Activated B cell treated with CpG ODN at 0.5 μM for 24 hours (primary cell): ENCODE measurements at regions of chr10 and their contacts with region 1.

Region 1: GRCh38 chr10:62816331-62817120 is at the start of gene EGR2:
- DNase-seq: peak; percentile 96
- ATAC-seq: peak; percentile 75
- H3K4me3 Mint-ChIP-seq: peak within 1 kb of the TSS; percentile 92
- H3K27ac Mint-ChIP-seq: peak within 1 kb of the TSS; percentile 94
- H3K4me1 Mint-ChIP-seq: peaks cover 56% of the 10 kb centered on the region
- H3K27me3 Mint-ChIP-seq: peaks cover 8% of the 10 kb centered on the region
- CTCF ChIP-seq: no peak
- total RNA-seq, gene EGR2: 6.1 and 9.4 TPM in 2 replicates

Region 2: DNA sequence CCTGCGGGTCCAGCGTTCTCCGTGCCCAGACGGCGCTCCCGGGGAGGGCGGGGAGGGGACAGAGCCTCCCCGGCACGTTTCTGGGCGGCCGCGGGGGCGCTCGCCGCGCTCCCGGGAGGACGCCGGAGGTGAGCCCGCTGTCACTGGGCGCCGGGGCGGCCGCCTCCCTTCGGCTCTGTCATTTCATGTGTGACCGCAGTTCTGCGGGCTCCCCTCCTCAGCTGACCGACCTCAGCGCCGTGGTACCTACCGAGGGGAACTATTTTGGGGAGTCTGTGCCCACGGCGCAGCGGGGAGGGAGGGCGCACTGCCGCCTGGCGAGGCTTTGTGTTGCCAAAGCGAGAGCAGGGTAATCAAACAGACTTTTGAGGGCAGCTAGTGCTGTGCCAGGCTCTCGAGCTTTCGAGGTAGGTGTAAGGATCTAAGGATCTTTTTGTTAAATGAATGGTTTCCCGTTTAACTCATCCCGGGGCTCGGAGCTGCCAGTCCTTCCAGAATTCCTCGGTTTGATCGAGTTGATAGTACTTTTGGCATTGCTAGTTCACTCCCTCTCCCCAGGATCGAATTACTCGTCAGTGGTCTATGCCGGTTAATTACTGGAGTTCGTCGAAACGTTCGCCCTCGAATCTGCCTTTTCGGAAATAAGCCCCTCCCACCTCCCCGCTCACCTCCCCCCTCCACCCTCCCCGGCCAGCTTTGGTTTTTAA is 913.2 kb before region 1 on chr10:
- CTCF ChIA-PET with region 1: no interaction called
- POLR2A ChIA-PET with region 1: interaction called, 3 read pairs
- intact Hi-C with region 1: loop called (anchors 2 kb)
- DNase-seq: peak; percentile 76
- ATAC-seq: peak; percentile 46
- H3K4me3 Mint-ChIP-seq: peak overlapping the region; percentile 97
- H3K27ac Mint-ChIP-seq: peak overlapping the region; percentile 98
- H3K4me1 Mint-ChIP-seq: peaks cover 51% of the 10 kb centered on the region
- H3K27me3 Mint-ChIP-seq: no peaks in the 10 kb centered on the region
- CTCF ChIP-seq: no peak

Region 3: GRCh38 chr10:62492012-62492869 is 324.3 kb before region 1 on chr10:
- CTCF ChIA-PET with region 1: interaction called, 6 read pairs
- POLR2A ChIA-PET with region 1: no interaction called
- intact Hi-C with region 1: loop called (anchors 1 kb)
- DNase-seq: no peak
- ATAC-seq: peak; percentile 49
- H3K4me3 Mint-ChIP-seq: no peak overlapping the region
- H3K27ac Mint-ChIP-seq: no peak overlapping the region
- H3K4me1 Mint-ChIP-seq: peaks cover 27% of the 10 kb centered on the region
- H3K27me3 Mint-ChIP-seq: peaks cover 4% of the 10 kb centered on the region
- CTCF ChIP-seq: no peak

Region 4: DNA sequence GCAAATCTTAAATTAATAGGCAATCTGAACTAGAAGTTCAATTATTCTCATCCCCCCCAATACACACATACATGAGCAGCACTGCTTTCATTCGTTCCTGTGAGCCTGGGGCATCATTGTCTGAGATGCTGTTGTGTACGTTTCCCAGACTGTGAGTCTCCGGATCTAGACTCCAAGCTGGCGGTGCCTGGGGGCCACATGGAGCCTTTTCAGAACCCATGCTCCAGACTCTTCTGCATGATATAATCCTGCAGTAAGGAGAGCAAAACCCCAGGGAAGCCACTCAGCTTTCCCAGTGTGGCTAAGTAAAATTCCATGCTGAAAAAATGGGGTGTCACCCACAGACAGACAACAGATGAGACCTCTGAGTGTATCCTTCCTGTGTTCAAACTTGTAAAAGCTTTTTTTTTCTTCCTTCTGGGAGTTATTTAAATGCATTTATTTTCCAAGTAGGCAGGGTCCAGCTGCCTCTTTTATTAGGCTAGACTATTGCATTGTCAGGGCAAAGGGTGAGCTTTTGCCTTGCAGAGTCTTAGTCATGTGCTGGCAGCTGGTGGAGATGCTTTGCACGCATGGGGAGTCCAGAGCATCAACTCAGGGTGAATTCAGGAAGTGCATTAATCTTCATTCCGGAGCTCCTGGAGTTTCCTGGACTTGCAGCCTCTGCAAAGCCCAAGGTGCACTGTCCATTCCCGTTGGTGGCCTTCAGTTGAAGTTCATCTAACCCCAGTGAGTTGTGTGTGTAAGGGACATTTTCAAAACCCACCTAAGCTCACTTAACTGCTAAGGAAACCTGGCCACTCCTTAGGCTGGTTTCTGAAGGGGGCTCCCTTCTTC is 197.7 kb before region 1 on chr10:
- CTCF ChIA-PET with region 1: interaction called, 171 read pairs
- POLR2A ChIA-PET with region 1: interaction called, 4 read pairs
- intact Hi-C with region 1: no loop called
- DNase-seq: no peak
- ATAC-seq: peak; percentile 80
- H3K4me3 Mint-ChIP-seq: no peak overlapping the region
- H3K27ac Mint-ChIP-seq: peak overlapping the region; percentile 68
- H3K4me1 Mint-ChIP-seq: peaks cover 28% of the 10 kb centered on the region
- H3K27me3 Mint-ChIP-seq: no peaks in the 10 kb centered on the region
- CTCF ChIP-seq: no peak

Region 5: GRCh38 chr10:62689712-62690111 is 126.8 kb before region 1 on chr10:
- CTCF ChIA-PET with region 1: interaction called, 5 read pairs
- POLR2A ChIA-PET with region 1: interaction called, 6 read pairs
- intact Hi-C with region 1: loop called (anchors 2 kb)
- DNase-seq: no peak
- ATAC-seq: peak; percentile 76
- H3K4me3 Mint-ChIP-seq: peak overlapping the region; percentile 70
- H3K27ac Mint-ChIP-seq: peak overlapping the region; percentile 75
- H3K4me1 Mint-ChIP-seq: peaks cover 43% of the 10 kb centered on the region
- H3K27me3 Mint-ChIP-seq: no peaks in the 10 kb centered on the region
- CTCF ChIP-seq: no peak

Region 6: GRCh38 chr10:63027531-63027930 is 211.0 kb after region 1 on chr10:
- CTCF ChIA-PET with region 1: no interaction called
- POLR2A ChIA-PET with region 1: no interaction called
- intact Hi-C with region 1: no loop called
- DNase-seq: no peak
- ATAC-seq: no peak
- H3K4me3 Mint-ChIP-seq: no peak overlapping the region
- H3K27ac Mint-ChIP-seq: no peak overlapping the region
- H3K4me1 Mint-ChIP-seq: no peaks in the 10 kb centered on the region
- H3K27me3 Mint-ChIP-seq: peaks cover 4% of the 10 kb centered on the region
- CTCF ChIP-seq: no peak

Region 7: DNA sequence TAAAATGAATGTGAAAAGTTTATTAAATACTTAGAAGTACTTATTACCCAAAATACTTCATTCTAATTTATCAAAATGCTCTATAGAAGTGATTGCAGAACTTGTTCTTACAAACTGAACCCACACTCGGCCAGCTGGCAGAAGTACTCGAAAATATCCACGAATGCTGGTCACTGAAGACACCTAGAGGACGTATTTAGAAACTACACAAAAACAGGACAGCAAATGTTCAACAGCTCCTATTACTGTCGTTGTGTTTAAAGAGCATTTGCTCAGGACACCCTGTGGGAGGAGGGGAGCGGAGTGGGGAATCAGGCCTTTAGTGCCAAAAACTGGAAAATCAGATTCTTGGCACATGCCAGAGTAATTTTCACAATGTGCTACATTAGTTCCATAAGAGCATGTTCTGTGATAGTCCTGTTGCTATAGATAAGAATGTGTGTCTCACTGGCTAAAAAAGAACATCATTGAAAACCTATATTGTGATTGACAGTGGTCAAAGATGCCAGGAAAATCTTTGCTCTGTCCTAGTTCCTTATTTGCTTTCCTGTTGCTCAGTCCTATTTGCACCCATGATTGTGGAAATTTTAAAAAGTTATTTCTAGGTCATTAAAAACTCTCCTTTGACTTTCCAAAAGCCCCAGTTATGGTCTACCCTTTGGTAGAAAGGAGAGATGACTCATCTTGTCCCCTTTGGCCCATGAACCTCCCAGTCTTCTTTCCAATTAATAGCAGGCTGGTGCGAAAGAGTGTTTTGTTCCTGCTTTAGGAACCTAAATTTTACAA is 267.6 kb after region 1 on chr10:
- CTCF ChIA-PET with region 1: interaction called, 14 read pairs
- POLR2A ChIA-PET with region 1: no interaction called
- intact Hi-C with region 1: loop called (anchors 1 kb)
- DNase-seq: no peak
- ATAC-seq: peak; percentile 77
- H3K4me3 Mint-ChIP-seq: no peak overlapping the region
- H3K27ac Mint-ChIP-seq: no peak overlapping the region
- H3K4me1 Mint-ChIP-seq: no peaks in the 10 kb centered on the region
- H3K27me3 Mint-ChIP-seq: peaks cover 9% of the 10 kb centered on the region
- CTCF ChIP-seq: peak; percentile 53

Region 8: GRCh38 chr10:63629363-63630084 is 813.0 kb after region 1 on chr10:
- CTCF ChIA-PET with region 1: no interaction called
- POLR2A ChIA-PET with region 1: no interaction called
- intact Hi-C with region 1: loop called (anchors 2 kb)
- DNase-seq: peak; percentile 67
- ATAC-seq: peak; percentile 60
- H3K4me3 Mint-ChIP-seq: peak overlapping the region; percentile 91
- H3K27ac Mint-ChIP-seq: peak overlapping the region; percentile 94
- H3K4me1 Mint-ChIP-seq: peaks cover 28% of the 10 kb centered on the region
- H3K27me3 Mint-ChIP-seq: no peaks in the 10 kb centered on the region
- CTCF ChIP-seq: peak; percentile 38